ENCODE measurements at regions of chr12 and their contacts with region 1.

Region 1: DNA sequence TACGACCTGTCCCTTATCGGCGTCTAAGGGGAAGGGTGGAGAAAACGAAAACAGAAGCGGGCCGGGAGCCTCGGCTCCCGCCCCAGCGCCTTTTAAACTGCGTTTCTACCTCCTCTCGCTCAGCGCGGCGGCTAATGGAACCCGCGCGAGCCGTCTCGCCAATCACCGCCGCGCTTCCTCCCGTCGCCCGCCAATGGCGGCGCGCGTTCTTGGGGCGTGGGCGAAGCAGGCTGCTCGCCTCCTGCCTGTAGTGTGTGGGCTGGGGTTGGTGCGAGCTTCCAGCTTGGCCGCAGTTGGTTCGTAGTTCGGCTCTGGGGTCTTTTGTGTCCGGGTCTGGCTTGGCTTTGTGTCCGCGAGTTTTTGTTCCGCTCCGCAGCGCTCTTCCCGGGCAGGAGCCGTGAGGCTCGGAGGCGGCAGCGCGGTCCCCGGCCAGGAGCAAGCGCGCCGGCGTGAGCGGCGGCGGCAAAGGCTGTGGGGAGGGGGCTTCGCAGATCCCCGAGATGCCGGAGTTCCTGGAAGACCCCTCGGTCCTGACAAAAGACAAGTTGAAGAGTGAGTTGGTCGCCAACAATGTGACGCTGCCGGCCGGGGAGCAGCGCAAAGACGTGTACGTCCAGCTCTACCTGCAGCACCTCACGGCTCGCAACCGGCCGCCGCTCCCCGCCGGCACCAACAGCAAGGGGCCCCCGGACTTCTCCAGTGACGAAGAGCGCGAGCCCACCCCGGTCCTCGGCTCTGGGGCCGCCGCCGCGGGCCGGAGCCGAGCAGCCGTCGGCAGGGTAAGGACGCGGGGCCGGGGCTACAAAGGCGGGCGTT is at the start of gene TMPO:
- DNase-seq: peak; percentile 94
- ATAC-seq: peak; percentile 100
- total RNA-seq, gene TMPO: 15.6 TPM

Region 2: DNA sequence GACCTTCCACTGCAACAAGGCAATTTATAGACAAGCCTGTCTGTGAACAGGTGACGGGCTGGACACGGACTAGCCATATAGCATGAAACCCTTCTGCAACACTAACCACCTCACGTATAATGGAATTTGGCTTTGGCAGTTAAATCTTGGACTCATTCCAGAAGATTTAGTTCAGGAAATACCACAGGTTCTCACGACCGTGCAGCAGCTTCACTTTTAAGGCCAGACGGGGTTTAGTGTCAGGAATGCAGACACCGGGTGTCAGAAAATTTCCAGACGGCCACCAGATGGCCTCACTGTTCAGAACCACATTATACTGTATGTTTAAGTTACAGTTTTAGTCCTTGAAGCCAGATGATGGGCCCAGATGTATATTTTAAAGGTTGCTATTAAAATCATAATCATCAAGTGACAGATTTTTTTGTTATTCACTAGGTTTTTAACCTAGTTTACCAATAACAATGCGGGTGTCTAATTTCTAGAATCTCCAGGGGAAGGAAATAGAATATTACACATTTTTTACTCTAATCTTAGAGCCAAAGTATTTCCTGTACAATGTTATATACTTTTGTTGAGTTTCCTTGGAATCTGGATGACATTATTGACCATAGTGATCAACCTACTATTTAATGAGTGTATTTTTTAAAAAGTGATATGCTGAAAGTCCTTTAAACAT is 90.7 kb before region 1 on chr12:
- intact Hi-C with region 1: loop called (anchors 2 kb)
- DNase-seq: no peak
- ATAC-seq: peak; percentile 63

Region 3: GRCh38 chr12:98490501-98491453 is 24.8 kb before region 1 on chr12:
- intact Hi-C with region 1: loop called (anchors 1 kb)
- DNase-seq: peak; percentile 90
- ATAC-seq: peak; percentile 81

Region 4: DNA sequence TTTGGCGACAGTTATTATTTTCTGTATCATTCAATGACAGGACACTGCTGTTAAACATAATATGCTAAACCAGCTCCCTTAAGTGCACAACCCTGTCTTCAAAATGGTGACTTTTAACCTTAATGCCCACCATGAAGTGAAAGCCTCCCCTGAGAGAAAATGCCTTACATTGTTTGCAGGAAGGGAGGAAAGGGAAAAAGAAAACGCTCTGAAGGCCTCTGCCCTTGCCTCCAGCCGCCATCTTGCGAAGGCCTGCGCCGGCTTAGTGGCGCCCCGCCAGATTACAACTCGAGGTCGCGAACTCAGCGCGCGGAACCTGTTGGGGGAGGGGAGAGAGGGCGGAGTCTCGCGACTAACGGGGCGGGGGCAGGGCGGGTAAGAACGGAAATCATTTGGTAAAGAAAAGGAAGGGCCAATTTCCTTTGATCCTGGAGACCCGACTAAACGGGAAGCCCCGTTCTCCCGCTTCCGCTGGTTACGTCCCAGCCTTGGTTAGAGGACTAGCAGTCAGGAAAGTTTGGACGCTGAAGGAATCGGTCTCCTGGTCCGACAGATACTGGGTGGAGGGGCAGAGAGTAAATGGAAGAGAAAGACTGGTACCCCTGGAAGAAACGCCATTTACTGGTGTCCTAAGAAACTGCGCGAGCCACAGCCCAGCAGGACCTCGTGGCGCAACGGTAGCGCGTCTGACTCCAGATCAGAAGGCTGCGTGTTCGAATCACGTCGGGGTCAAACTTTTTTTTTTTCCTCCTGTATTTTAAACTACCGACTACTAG is 11.8 kb before region 1 on chr12:
- intact Hi-C with region 1: loop called (anchors 1 kb)
- DNase-seq: peak; percentile 98
- ATAC-seq: peak; percentile 95